ENCODE measurements at regions of chr5 and their contacts with region 1.

Region 1: GRCh38 chr5:173615884-173616576 is 420 bp downstream of the BOD1 start:
- DNase-seq: peak; percentile 35 to 61
- ATAC-seq: peak; percentile 73 to 77
- H3K4me3 ChIP-seq: peak overlapping the region; percentile 75 to 91 (median 88)
- H3K27ac ChIP-seq: peak overlapping the region; percentile 95 to 98 (median 97)
- H3K4me1 ChIP-seq: peaks cover 40 to 49% of the 10 kb centered on the region in 2 donors
- H3K27me3 ChIP-seq: no peaks in the 10 kb centered on the region
- CTCF ChIP-seq: peak; percentile 46 to 81 (median 67)
- POLR2A ChIP-seq: no peak

Region 2: GRCh38 chr5:173707392-173707791 is 91.4 kb after region 1 on chr5:
- in situ Hi-C with region 1: no loop called
- intact Hi-C with region 1: loop called (anchors 5 kb)
- DNase-seq: peak; percentile 93 to 97
- ATAC-seq: peak; percentile 98 to 99
- H3K4me3 ChIP-seq: no peak overlapping the region
- H3K27ac ChIP-seq: peak overlapping the region; percentile 78 to 86 (median 84)
- H3K4me1 ChIP-seq: peaks cover 16 to 19% of the 10 kb centered on the region in 2 donors
- H3K27me3 ChIP-seq: no peaks in the 10 kb centered on the region
- CTCF ChIP-seq: no peak
- POLR2A ChIP-seq: peak; percentile 15 to 37

Region 3: GRCh38 chr5:174311531-174312269 is 695.7 kb after region 1 on chr5:
- in situ Hi-C with region 1: loop called (anchors 25 kb)
- intact Hi-C with region 1: loop called (anchors 2 kb)
- DNase-seq: peak in 1 of 2 donors; percentile 41
- ATAC-seq: peak; percentile 69 to 73
- H3K4me3 ChIP-seq: peak overlapping the region; percentile 33 to 59 (median 37)
- H3K27ac ChIP-seq: peak overlapping the region in 2 of 4 donors; percentile 8 to 74
- H3K4me1 ChIP-seq: peaks cover 15 to 19% of the 10 kb centered on the region in 2 donors
- H3K27me3 ChIP-seq: no peaks in the 10 kb centered on the region
- CTCF ChIP-seq: peak; percentile 63 to 89 (median 82)
- POLR2A ChIP-seq: no peak